Natural killer cell (primary cell): ENCODE measurements at regions of chr15 and their contacts with region 1.

Region 1: DNA sequence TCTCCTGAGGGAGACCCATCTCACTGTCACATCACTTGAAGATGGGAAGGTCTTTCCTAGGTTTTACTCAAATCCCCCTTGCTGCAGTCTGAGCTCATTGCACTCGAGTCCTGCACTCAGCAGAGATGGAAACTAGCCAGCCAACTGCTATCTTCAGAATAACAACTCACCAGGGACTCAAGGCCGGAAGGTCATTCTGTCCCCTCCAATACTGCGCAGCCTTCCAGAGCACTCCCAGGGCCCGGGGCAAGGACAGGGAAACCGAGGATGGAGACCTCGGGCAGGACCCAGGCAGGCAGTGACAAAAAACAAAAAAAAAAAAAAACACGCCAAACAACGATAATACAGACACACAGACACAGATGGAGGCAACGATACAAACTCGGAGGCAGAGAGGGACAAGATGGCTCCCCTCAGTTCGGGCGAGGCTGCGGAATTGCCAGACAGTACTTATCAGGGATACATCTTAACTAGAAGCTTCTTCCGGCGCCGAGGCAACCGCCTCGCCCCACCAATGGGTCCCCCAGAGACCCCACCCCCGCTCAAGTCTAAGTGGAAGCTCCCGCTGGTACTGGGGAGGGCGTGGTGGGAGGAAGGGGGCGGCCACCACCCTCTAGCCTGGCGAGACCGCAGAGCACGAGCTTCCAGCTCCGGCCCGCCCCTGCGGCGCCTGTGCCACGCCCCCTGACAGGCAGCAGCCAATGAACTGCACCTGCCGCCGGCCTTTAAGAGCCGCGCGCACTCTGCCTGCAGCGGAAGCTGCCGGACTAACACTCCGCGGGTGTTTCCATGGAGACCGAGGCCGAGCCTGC is 7.0 kb upstream of the MAP1A start:
- DNase-seq: peak; percentile 93 to 98
- ATAC-seq: peak; percentile 94 to 99 (median 95)
- H3K4me3 ChIP-seq: peak overlapping the region; percentile 74
- H3K4me3 Mint-ChIP-seq: peak overlapping the region; percentile 88
- H3K27ac ChIP-seq: peak overlapping the region; percentile 70
- H3K27ac Mint-ChIP-seq: peak overlapping the region; percentile 85 to 99
- H3K4me1 ChIP-seq: peaks cover 15% of the 10 kb centered on the region
- H3K4me1 Mint-ChIP-seq: peaks cover 23% of the 10 kb centered on the region in 2 donors
- H3K27me3 ChIP-seq: no peaks in the 10 kb centered on the region
- H3K27me3 Mint-ChIP-seq: peaks cover 7 to 19% of the 10 kb centered on the region in 2 donors
- CTCF ChIP-seq: no peak

Region 2: GRCh38 chr15:43370975-43371974 is 139.1 kb before region 1 on chr15 and contains the starts of genes TUBGCP4 and ZSCAN29:
- intact Hi-C with region 1: loop called (anchors 5 kb)
- DNase-seq: peak; percentile 71 to 84
- ATAC-seq: peak; percentile 82 to 86 (median 83)
- H3K4me3 ChIP-seq: peak within 1 kb of the TSS; percentile 83
- H3K4me3 Mint-ChIP-seq: peak within 1 kb of the TSS; percentile 96
- H3K27ac ChIP-seq: peak within 1 kb of the TSS; percentile 67
- H3K27ac Mint-ChIP-seq: peak within 1 kb of the TSS; percentile 76 to 89
- H3K4me1 ChIP-seq: peaks cover 20% of the 10 kb centered on the region
- H3K4me1 Mint-ChIP-seq: peaks cover 58 to 61% of the 10 kb centered on the region in 2 donors
- H3K27me3 ChIP-seq: no peaks in the 10 kb centered on the region
- H3K27me3 Mint-ChIP-seq: no peaks in the 10 kb centered on the region
- CTCF ChIP-seq: no peak
- total RNA-seq, gene TUBGCP4: 12.0 to 17.5 (median 15.1) TPM
- total RNA-seq, gene ZSCAN29: 26.5 to 38.3 (median 34.2) TPM

Region 3: GRCh38 chr15:43492673-43493601 is 17.5 kb before region 1 on chr15 and contains the start of gene TP53BP1:
- intact Hi-C with region 1: loop called (anchors 1 kb)
- DNase-seq: peak; percentile 93 to 97
- ATAC-seq: peak; percentile 97 to 100 (median 99)
- H3K4me3 ChIP-seq: peak within 1 kb of the TSS; percentile 75
- H3K4me3 Mint-ChIP-seq: peak within 1 kb of the TSS; percentile 97
- H3K27ac ChIP-seq: peak within 1 kb of the TSS; percentile 82
- H3K27ac Mint-ChIP-seq: peak within 1 kb of the TSS; percentile 93 to 95
- H3K4me1 ChIP-seq: peaks cover 4% of the 10 kb centered on the region
- H3K4me1 Mint-ChIP-seq: peaks cover 24 to 28% of the 10 kb centered on the region in 2 donors
- H3K27me3 ChIP-seq: no peaks in the 10 kb centered on the region
- H3K27me3 Mint-ChIP-seq: no peaks in the 10 kb centered on the region
- CTCF ChIP-seq: no peak
- total RNA-seq, gene TP53BP1: 27.9 to 32.9 (median 31.5) TPM

Region 4: DNA sequence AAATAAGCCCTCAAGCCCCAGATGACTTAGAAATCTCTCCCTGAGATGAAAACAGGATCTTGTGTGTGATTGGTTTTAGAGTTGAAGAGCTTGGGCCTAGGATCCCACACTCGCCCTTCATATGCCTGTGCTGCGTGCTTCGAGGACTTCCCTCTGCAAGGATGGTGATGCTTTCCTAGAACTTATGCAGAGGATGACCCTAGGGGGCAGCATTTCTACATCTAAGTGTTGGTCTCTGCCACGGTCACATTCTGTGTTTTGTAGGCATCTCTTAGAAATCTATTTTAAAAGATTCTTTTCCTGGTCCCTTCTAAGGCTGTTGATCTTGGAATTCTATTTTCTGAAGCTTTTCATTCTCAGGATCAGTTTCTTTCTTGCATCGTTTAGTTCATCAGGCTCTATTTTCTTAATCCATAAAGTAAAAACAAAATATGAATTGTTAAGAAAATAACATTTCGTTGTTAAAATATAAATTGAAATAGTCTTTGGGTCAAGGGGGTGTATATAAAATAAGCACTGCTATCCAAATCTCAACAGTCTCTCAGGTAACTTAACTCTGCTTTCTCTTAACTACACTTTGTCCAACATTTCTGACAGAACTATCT is 362.1 kb after region 1 on chr15:
- intact Hi-C with region 1: no loop called
- DNase-seq: peak in 1 of 2 donors; percentile 48
- ATAC-seq: no peak
- H3K4me3 ChIP-seq: no peak overlapping the region
- H3K4me3 Mint-ChIP-seq: no peak overlapping the region
- H3K27ac ChIP-seq: no peak overlapping the region
- H3K27ac Mint-ChIP-seq: no peak overlapping the region
- H3K4me1 ChIP-seq: no peaks in the 10 kb centered on the region
- H3K4me1 Mint-ChIP-seq: no peaks in the 10 kb centered on the region
- H3K27me3 ChIP-seq: no peaks in the 10 kb centered on the region
- H3K27me3 Mint-ChIP-seq: no peaks in the 10 kb centered on the region
- CTCF ChIP-seq: no peak